Posterior cingulate gyrus (tissue), 11 donors: ENCODE measurements at regions of chr14 and their contacts with region 1.

Region 1: DNA sequence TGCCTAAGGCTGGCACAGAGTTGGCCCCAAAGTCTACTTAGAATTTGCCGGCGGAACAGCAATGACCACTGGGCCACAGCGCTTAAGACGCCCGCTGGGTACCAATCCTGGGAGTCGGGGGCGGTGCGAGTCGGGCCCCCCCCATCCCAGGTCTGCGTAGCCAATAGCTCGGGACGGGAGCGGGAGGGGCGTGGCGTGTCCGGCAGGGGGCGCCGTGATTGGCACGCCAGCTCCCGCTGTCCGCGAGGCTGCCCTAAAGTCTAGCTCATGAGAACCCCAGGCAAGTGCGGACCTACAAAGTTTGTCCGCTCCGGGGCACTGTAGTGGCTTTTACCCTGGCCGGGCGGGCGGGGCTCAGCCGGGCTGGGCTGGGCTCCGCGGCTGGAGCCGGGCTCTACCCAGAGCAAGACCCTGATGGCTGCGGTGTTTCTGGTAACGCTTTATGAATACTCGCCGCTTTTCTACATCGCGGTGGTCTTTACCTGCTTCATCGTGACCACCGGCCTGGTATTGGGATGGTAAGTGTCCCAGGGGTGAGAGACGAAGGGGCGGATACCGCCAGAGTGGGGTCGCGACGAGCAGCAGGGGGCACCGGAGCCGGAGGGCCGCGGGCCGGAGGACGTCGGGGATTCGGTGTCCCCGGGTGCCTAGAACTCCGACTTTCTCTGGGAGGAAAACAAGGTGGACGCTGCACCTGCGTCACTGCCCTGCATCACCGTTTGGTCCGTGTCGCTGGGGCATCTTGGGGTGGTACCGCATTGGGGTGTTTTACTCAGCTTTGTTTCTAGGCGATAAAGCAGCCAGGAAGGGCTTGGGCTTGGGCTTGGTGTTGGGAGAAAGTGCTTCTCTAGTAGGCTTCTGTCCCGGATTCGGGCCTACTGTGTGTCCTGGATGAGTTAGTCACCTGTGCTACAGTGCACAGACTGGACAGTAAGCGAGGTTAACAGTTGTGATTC is at the start of gene CGRRF1:
- DNase-seq: peak; percentile 98 to 100 (median 99)

Region 2: GRCh38 chr14:54440873-54441868 is 68.7 kb before region 1 on chr14 and contains the start of gene CNIH1:
- intact Hi-C with region 1: loop called (anchors 5 kb)
- DNase-seq: peak; percentile 85 to 98 (median 90)

Region 3: DNA sequence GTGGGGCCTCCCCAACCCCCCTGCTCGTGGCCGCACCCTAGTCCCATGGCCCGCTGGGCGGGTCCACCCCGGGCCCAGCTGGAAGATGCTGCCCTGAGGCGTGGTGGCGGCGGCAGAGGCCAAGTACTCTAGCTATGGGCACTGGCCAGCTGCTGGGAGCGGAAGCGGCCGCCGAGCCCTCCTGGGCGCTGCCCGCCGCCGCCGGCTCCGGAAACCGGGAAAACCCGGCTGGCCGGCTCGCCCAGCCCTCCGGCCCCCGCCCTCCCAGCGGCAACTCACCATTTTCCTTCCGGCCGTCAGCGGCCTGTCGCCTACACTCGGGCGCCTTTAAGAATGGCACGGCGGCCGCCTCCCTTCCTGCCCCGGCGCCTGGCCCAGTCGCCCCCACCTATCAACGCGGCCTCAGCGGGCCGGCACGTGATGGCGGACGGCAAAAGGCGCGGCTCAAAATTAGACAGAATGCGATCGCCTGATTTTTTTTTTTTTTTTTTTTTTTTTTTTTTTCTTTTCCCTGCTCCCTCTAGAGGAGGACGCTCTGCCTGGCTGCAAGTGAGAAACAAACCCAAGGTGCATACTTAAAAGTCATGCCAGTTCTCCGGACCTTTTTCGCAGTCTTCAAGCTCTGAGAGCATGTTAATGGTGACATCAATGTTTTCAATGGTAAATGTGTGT is 21.0 kb before region 1 on chr14 and contains the start of gene GMFB:
- intact Hi-C with region 1: loop called (anchors 2 kb)
- DNase-seq: peak; percentile 82 to 97 (median 88)

Region 4: DNA sequence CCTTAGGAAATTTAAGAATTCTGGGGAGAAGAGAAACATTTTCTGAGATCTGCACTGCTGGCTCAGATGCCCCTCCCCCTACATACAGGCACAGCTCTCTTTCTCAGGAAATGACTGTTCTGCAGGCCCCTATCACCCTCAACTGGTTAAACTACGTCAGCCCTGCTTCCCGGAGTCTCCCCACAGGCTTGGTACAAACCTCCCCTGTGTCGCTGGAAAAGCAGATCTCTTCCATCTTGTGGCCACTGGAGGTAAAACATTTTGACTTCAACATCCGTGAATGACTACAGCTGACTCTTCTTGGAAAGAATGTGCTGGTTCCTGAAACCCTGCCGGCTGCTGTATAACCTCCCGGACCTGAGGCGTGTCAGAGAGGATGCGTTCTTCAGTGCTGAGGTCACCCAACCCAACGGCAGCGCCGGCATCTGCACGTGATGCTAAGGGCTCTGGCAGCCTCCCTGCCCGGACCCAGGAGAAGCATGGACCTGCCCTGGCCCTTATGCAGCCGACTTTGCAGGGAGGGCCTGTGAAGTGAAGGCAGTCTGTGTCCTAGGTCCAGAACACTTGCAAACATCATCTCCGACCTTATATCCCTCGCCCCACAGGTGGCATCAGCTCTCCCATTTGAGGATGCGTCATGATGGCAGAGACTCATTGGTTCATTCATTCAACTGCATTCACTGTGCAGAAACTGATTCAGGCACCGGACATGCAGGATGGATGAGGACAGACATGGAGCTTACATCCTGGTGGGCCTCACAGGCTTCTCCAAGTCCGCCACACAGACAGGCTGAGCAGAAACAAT is 263.5 kb after region 1 on chr14:
- intact Hi-C with region 1: loop called (anchors 10 kb)
- DNase-seq: peak in 6 of 10 donors; percentile 37 to 91 (median 58)